Psoas muscle (tissue), 8 donors: ENCODE measurements at regions of chr13 and their contacts with region 1.

Region 1: DNA sequence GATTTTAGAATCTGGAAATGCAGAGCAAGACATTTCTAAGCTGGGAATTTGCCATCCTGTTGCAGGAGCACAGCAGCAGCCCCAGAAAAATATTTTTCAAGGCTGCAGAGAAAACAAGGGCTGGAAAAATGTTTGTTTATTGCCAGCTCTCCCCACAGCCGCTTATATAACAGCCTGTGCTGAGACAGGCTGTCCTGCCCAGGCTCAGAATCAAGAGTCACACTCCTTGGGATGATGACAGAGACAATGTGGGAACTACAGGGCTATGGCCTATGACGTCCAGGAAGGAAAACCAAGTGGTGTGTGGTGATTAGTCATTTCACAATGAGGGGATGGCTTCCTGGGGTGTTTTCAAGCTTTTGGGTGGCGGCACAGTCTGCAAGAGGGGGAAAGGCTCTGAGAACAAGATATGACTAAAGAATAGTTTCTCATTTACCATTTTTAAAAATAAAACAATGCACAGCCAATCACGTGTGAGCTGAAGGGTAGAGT is 136.3 kb upstream of the SERP2 start:
- DNase-seq: peak; percentile 56 to 78
- ATAC-seq: peak; percentile 88 to 95 (median 92)
- H3K4me3 ChIP-seq: no peak overlapping the region
- H3K27ac ChIP-seq: peak overlapping the region; percentile 92
- H3K4me1 ChIP-seq: peaks cover 44% of the 10 kb centered on the region
- H3K27me3 ChIP-seq: no peaks in the 10 kb centered on the region
- CTCF ChIP-seq: no peak

Region 2: DNA sequence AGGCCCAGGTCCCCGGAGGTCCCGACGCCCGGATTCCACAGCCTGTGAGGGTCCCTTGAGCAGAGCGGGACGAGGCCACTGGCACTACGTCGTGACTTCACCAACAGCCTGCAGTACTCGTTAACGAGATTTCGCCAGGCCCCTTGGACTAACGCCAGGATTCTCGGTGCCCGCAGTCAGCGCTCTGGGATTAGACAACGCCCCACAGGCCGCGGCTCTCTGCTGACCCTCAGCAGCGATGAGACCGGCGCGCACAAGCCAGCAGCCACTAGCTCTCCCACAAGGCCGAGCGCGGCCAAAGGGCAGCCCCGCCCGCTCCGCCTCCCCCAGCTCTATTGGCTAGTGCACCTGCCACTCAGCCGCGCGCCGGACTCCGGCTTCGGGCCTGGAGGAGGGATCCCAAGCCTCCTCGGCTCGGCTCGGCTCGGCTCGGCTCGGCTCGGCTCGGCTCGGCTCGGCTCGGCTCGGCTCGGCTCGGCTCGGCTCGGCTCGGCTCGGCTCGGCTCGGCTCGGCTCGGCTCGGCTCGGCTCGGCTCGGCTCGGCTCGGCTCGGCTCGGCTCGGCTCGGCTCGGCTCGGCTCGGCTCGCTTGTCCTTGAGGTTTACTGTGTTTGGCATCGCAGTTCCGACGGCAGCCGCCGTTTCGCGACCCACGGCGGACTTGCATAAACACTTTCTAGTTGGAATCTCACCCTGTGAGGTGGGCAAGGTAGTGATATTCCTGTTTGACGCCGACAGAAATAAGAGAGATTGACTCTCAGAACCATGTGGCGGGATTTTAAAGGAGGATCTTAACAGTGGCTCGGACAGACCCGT is 95.4 kb before region 1 on chr13:
- intact Hi-C with region 1: loop called in 1 of 2 experiments (anchors 5 kb)
- DNase-seq: peak; percentile 98 to 99
- ATAC-seq: peak; percentile 97 to 98 (median 97)
- H3K4me3 ChIP-seq: peak overlapping the region; percentile 73
- H3K27ac ChIP-seq: peak overlapping the region; percentile 95
- H3K4me1 ChIP-seq: peaks cover 13% of the 10 kb centered on the region
- H3K27me3 ChIP-seq: no peaks in the 10 kb centered on the region
- CTCF ChIP-seq: no peak

Region 3: GRCh38 chr13:44155422-44156293 is 81.7 kb before region 1 on chr13:
- intact Hi-C with region 1: loop called in 1 of 2 experiments (anchors 10 kb)
- DNase-seq: peak; percentile 47 to 70
- ATAC-seq: peak; percentile 24 to 49 (median 32)
- H3K4me3 ChIP-seq: peak overlapping the region; percentile 57
- H3K27ac ChIP-seq: peak overlapping the region; percentile 87
- H3K4me1 ChIP-seq: peaks cover 77% of the 10 kb centered on the region
- H3K27me3 ChIP-seq: no peaks in the 10 kb centered on the region
- CTCF ChIP-seq: no peak

Region 4: DNA sequence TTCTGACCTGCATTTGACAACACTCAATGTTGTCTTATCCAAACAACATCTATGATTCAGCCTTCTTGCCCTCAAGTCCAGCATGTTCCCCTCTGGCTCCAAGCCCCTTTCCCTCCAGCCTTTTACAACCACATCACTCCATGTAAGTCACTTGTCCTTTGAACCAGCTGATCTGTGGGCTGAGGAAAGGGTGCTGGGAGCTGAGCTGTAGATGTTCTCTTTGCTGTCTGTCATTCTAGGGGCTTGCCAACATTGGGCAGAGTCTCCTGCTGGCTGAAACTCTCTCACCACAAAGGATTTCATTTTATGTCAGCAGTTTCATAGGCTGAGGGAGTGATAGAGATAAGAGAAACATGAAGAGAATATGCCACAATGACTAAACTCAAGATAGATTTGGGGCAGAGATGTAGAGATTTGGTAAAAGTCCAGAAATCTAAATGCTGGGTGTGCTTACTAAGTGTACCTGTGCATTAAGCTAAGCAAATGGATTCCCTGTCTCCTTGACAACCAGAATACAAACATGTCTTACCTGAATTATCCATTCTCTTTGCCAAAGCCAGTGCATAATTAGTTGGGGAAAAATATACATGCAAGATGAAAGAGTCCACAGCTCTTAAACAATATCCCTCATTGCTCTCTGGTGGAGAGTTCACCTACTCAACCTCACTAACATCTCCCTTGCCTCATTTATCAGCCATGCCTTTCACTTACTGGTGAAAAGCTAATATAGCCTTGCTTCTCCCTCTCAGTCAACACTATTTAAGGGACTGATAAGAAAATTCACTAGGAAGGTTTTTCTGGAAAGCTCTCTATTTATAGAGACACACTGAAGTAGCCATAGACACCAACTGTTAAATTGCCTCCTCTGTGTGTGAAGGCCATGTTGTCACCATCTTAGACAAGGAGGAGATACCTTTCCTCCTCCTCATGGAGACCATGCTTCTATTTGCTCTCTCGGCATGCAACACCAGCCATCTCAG is 39.2 kb before region 1 on chr13:
- intact Hi-C with region 1: loop called in 1 of 2 experiments (anchors 5 kb)
- DNase-seq: no peak
- ATAC-seq: no peak
- H3K4me3 ChIP-seq: no peak overlapping the region
- H3K27ac ChIP-seq: no peak overlapping the region
- H3K4me1 ChIP-seq: peaks cover 19% of the 10 kb centered on the region
- H3K27me3 ChIP-seq: no peaks in the 10 kb centered on the region
- CTCF ChIP-seq: no peak

Region 5: GRCh38 chr13:44273644-44274451 is 36.5 kb after region 1 on chr13:
- intact Hi-C with region 1: loop called (anchors 2 kb)
- DNase-seq: no peak
- ATAC-seq: no peak
- H3K4me3 ChIP-seq: peak overlapping the region; percentile 19
- H3K27ac ChIP-seq: peak overlapping the region; percentile 71
- H3K4me1 ChIP-seq: peaks cover 38% of the 10 kb centered on the region
- H3K27me3 ChIP-seq: no peaks in the 10 kb centered on the region
- CTCF ChIP-seq: no peak

Region 6: DNA sequence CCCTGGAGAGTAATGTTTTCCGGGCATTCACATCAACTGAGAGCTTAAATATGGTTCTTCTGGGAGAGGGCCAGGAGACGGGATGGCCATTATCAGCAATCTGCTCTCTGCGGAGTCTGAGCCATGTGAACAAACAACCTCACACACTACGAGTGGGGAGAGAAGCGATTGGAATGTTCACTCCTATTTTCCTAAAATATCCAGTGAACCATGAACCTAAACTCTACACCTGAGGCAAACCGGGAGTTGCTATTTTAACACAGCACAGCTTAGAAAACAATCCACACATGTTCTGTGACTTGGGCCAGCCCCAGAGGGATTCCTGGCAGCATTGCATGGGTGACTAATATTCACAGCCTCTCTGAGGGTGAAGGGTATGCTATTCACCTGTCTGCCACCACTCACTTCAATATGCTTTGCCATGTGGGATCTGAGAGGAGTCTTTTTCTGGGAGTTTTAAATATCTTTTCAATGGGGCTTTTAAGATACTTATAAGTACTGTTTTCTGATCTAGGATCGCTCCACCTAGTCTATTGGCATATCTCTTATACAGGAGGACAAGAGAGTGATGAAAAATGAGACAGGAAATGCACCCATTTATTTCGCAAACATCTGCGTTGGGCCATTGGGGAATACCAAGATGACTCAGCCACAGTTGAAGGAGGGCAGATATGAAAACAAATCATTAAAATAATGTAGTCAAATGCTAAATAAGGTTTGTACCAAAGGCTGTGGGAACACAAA is 63.7 kb after region 1 on chr13:
- intact Hi-C with region 1: loop called in 1 of 2 experiments (anchors 2 kb)
- DNase-seq: peak; percentile 39 to 78
- ATAC-seq: peak; percentile 94 to 97 (median 95)
- H3K4me3 ChIP-seq: peak overlapping the region; percentile 28
- H3K27ac ChIP-seq: peak overlapping the region; percentile 90
- H3K4me1 ChIP-seq: peaks cover 69% of the 10 kb centered on the region
- H3K27me3 ChIP-seq: no peaks in the 10 kb centered on the region
- CTCF ChIP-seq: peak; percentile 3